Left ventricle myocardium inferior (tissue), 1 donor: ENCODE measurements at regions of chr9 and their contacts with region 1.

Region 1: GRCh38 chr9:3436629-3437420 is 89.0 kb downstream of the RFX3 start:
- DNase-seq: no peak
- H3K4me3 ChIP-seq: no peak overlapping the region
- H3K27ac ChIP-seq: no peak overlapping the region
- H3K4me1 ChIP-seq: peaks cover 6% of the 10 kb centered on the region
- H3K27me3 ChIP-seq: no peaks in the 10 kb centered on the region
- CTCF ChIP-seq: no peak

Region 2: DNA sequence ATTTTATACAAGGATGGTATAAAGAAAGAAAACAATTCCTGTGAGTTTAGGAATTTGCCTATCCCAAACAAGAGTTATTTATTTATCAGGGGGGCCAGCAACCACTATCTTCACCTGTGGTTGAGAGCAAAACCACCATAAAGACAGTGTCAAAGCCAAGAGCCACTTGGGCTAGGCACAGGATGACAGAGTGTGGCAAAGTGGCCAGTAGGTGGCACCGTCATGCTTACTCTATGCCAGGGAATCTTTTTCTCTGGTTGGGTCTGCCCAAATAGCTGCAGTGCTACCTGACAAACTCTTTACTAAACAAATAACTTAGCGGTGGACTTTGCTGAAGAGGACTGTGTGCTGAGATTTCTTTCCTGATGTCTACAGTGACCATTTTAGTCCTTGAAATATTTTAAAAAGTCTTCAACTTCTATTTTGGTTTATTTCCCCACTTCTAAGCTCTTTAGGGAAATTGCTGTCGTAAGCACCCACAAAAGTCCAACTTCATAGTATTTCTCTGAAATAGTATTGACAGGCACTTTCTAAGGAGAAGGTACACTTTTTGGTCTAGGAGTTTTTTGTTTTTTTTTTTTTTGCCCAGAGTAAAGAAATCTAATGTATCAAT is 196.1 kb before region 1 on chr9:
- intact Hi-C with region 1: loop called (anchors 5 kb)
- DNase-seq: peak; percentile 26
- H3K4me3 ChIP-seq: no peak overlapping the region
- H3K27ac ChIP-seq: no peak overlapping the region
- H3K4me1 ChIP-seq: no peaks in the 10 kb centered on the region
- H3K27me3 ChIP-seq: no peaks in the 10 kb centered on the region
- CTCF ChIP-seq: peak; percentile 82

Region 3: GRCh38 chr9:3498691-3499090 is 61.9 kb after region 1 on chr9:
- intact Hi-C with region 1: no loop called
- DNase-seq: no peak
- H3K4me3 ChIP-seq: no peak overlapping the region
- H3K27ac ChIP-seq: no peak overlapping the region
- H3K4me1 ChIP-seq: peaks cover 31% of the 10 kb centered on the region
- H3K27me3 ChIP-seq: no peaks in the 10 kb centered on the region
- CTCF ChIP-seq: no peak